OCI-LY7 (cell line): ENCODE measurements at regions of chr12 and their contacts with region 1.

Region 1: DNA sequence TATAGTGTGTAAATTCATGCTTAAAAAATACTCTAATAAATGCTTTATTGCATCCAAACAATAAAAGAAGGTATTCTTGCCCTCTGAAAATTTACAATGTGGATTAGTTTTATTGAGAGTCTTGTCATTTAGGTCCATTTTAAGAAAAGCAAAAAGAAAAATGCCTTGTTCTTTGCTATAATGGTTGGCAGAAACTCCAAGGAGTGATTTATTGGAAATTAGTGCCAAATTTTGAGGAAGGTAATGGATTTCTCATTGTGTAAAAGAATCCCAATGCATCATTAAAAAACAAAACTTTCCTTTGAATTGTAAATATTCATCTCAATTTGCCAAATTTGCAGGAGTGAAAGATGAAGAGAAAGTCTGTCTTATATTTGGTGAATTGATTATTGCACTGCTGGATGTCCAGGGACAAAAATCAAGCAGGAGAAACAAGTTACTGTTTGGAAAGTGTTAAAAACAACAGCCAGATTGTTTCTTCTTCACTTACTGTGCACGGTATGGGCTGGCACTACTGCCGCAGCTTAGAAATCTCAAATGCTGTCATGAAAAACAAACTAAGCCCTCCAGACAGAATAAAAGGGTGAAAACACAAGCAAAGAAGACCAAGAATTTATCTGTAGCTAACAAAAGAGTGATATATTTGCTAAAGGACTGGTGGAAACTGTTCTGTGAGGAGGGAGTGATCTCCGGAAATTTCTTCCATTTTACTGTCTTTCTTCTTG is 511.7 kb downstream of the TMTC2 start:
- DNase-seq: no peak
- H3K4me3 ChIP-seq: no peak overlapping the region
- H3K27ac ChIP-seq: no peak overlapping the region
- H3K4me1 ChIP-seq: no peaks in the 10 kb centered on the region
- CTCF ChIP-seq: no peak

Region 2: DNA sequence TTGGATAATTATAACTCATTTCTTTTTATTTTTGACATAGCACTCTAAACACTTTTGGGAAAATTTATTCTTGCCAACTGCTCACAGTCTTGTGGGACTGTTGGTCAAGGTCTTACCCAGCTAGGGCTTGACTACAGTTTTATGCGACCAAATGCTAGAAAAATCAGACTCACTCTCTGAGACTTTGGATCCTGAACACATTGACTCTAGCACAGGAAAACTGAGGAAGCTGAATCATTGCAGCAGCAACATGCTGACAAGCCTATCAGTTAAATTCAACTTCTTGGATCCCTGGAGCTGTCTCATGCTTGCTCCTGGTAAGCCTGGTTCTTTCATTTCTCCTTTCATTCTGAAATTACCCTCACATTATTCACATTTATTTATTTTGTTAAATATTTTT is 632.5 kb before region 1 on chr12:
- CTCF ChIA-PET with region 1: no interaction called
- POLR2A ChIA-PET with region 1: interaction called, 10 read pairs
- intact Hi-C with region 1: no loop called
- DNase-seq: no peak
- H3K4me3 ChIP-seq: no peak overlapping the region
- H3K27ac ChIP-seq: no peak overlapping the region
- H3K4me1 ChIP-seq: no peaks in the 10 kb centered on the region
- CTCF ChIP-seq: no peak

Region 3: DNA sequence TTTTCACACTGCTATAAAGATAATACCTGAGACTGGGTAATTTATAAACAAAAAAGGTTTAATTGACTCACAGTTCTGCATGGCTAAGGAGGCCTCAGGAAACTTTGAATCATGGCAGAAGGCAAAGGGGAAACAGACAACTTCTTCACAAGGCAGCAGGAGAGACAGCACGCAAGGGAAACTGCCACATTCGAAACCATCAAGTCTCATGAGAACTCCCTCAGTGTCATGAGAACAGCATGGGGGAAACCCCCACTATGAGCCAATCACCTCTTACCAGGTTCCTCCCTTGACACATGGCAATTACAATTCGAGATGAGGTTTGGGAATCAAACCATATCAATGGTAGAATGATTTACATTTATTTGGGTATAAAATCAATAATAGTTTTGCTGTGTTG is 46.7 kb after region 1 on chr12:
- CTCF ChIA-PET with region 1: no interaction called
- POLR2A ChIA-PET with region 1: no interaction called
- intact Hi-C with region 1: no loop called
- DNase-seq: no peak
- H3K4me3 ChIP-seq: no peak overlapping the region
- H3K27ac ChIP-seq: no peak overlapping the region
- H3K4me1 ChIP-seq: no peaks in the 10 kb centered on the region
- CTCF ChIP-seq: no peak